H1 (cell line): ENCODE measurements at regions of chr14 and their contacts with region 1.

Region 1: DNA sequence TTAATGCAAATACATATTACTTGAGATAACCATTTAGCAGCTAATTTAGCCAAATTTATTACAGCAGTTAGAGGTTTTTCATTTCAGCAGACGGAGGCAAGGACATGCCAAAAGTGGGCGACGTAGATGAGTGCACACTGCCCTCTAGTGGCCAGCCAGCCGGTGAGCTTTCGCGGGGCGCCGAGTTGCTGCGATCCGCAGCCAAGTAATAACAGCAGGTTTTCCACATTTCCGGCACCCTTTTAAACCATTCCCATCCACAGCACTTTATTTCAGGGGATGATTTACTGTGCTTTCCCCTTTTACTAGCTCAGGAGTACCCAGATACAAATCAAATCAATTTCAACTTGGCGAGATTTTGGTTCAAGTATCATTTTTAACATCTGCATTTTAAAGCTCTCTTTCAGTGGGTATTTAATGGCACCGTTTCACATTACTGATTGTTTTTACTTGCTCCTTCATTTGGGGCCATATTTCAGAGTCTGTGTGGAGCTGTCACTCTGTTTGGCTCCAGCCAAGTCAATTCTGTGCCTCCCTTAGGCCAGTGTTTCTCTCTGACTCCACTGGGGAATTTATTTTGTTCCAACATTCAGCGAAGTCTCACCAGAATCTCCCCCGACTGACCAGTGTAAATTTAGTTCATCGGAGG is 158.0 kb downstream of the EGLN3 start:
- DNase-seq: peak; percentile 46 to 94
- H3K4me3 ChIP-seq: no peak overlapping the region
- H3K27ac ChIP-seq: no peak overlapping the region
- H3K4me1 ChIP-seq: no peaks in the 10 kb centered on the region; a peak in 1 of 7 replicates
- H3K27me3 ChIP-seq: no peaks in the 10 kb centered on the region
- CTCF ChIP-seq: peak; percentile 86 to 94 (median 93)
- EP300 ChIP-seq: no peak
- POLR2A ChIP-seq: no peak
- RAD21 ChIP-seq: peak; percentile 95 to 99

Region 2: GRCh38 chr14:33475623-33476022 is 317.2 kb before region 1 on chr14:
- CTCF ChIA-PET with region 1: interaction called, 18 read pairs
- POLR2A ChIA-PET with region 1: no interaction called
- DNase-seq: peak; percentile 73 to 76
- H3K4me3 ChIP-seq: peak overlapping the region in 1 of 4 experiments; percentile 28; a peak in 1 of 8 replicates
- H3K27ac ChIP-seq: no peak overlapping the region
- H3K4me1 ChIP-seq: peaks cover 0 to 25% (median 9%) of the 10 kb centered on the region in 4 experiments; a peak in 5 of 7 replicates
- H3K27me3 ChIP-seq: no peaks in the 10 kb centered on the region
- CTCF ChIP-seq: peak; percentile 42 to 79 (median 58)
- EP300 ChIP-seq: peak in 1 of 2 experiments; percentile 52; a peak in 1 of 3 replicates
- POLR2A ChIP-seq: no peak
- RAD21 ChIP-seq: peak; percentile 77 to 79

Region 3: GRCh38 chr14:33676135-33676566 is 116.7 kb before region 1 on chr14:
- CTCF ChIA-PET with region 1: interaction called, 21 read pairs
- POLR2A ChIA-PET with region 1: no interaction called
- DNase-seq: peak; percentile 36 to 73
- H3K4me3 ChIP-seq: no peak overlapping the region
- H3K27ac ChIP-seq: no peak overlapping the region
- H3K4me1 ChIP-seq: no peaks in the 10 kb centered on the region
- H3K27me3 ChIP-seq: no peaks in the 10 kb centered on the region
- CTCF ChIP-seq: peak; percentile 56 to 73 (median 69)
- EP300 ChIP-seq: no peak
- POLR2A ChIP-seq: no peak
- RAD21 ChIP-seq: peak; percentile 82 to 90

Region 4: GRCh38 chr14:33781265-33781664 is 11.6 kb before region 1 on chr14:
- CTCF ChIA-PET with region 1: interaction called, 17 read pairs
- POLR2A ChIA-PET with region 1: no interaction called
- DNase-seq: no peak
- H3K4me3 ChIP-seq: no peak overlapping the region
- H3K27ac ChIP-seq: no peak overlapping the region
- H3K4me1 ChIP-seq: peaks cover 0 to 8% (median 0%) of the 10 kb centered on the region in 4 experiments; a peak in 1 of 7 replicates
- H3K27me3 ChIP-seq: no peaks in the 10 kb centered on the region
- CTCF ChIP-seq: no peak
- EP300 ChIP-seq: no peak
- POLR2A ChIP-seq: no peak
- RAD21 ChIP-seq: no peak

Region 5: GRCh38 chr14:33805593-33805992 is 12.7 kb after region 1 on chr14:
- CTCF ChIA-PET with region 1: interaction called, 26 read pairs
- POLR2A ChIA-PET with region 1: no interaction called
- DNase-seq: no peak
- H3K4me3 ChIP-seq: no peak overlapping the region
- H3K27ac ChIP-seq: no peak overlapping the region
- H3K4me1 ChIP-seq: peaks cover 0 to 5% (median 0%) of the 10 kb centered on the region in 4 experiments; a peak in 2 of 7 replicates
- H3K27me3 ChIP-seq: no peaks in the 10 kb centered on the region
- CTCF ChIP-seq: no peak
- EP300 ChIP-seq: no peak
- POLR2A ChIP-seq: no peak
- RAD21 ChIP-seq: no peak